Activated CD4-positive, alpha-beta T cell treated with anti-CD3 and anti-CD28 coated beads for 36 hours (primary cell): ENCODE measurements at regions of chr4 and their contacts with region 1.

Region 1: GRCh38 chr4:70734168-70734954 is 12.6 kb downstream of the RUFY3 start:
- DNase-seq: peak; percentile 39
- ATAC-seq: peak; percentile 92
- H3K4me3 Mint-ChIP-seq: peak overlapping the region; percentile 52
- H3K27ac Mint-ChIP-seq: peak overlapping the region; percentile 74
- H3K4me1 Mint-ChIP-seq: peaks cover 36% of the 10 kb centered on the region
- H3K27me3 Mint-ChIP-seq: no peaks in the 10 kb centered on the region

Region 2: DNA sequence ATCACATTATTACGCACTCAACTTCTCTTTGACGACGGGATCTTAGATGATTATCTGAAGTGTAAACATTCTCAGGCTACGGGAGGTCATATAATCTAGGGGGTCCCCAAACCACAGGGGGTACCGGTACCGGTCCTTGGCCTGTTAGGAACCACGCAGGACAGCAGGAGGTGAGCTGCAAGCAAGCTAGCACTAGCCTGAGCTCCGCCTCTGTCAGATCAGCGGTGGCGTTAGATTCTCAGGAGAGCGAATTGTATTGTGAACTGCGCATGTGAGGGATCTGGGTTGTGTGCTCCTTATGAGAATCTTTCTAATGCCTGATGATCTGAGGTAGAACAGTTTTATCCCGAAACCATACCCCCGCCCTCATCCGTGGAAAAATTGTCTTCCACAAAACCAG is 600.9 kb before region 1 on chr4:
- CTCF ChIA-PET with region 1: no interaction called
- POLR2A ChIA-PET with region 1: no interaction called
- intact Hi-C with region 1: no loop called
- DNase-seq: no peak
- ATAC-seq: no peak
- H3K4me3 Mint-ChIP-seq: no peak overlapping the region
- H3K27ac Mint-ChIP-seq: no peak overlapping the region
- H3K4me1 Mint-ChIP-seq: no peaks in the 10 kb centered on the region
- H3K27me3 Mint-ChIP-seq: no peaks in the 10 kb centered on the region

Region 3: DNA sequence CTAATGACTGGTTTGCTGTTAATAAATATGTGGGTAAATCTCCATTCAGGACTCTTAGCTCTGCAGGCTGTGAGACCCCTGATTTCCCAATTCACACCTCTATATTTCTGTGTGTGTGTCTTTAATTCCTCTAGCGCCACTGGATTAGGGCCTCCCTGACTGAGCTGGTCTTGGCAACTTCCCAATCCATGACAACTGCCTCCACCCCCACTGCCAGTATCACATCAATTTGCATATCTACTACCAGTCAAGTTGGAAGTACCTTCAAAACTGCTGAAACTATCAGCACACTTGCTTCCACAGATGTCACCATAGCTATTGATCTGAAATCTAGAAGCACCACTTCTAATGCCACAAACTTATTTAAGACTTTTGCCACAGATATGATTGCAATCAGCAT is 309.1 kb before region 1 on chr4:
- CTCF ChIA-PET with region 1: no interaction called
- POLR2A ChIA-PET with region 1: no interaction called
- intact Hi-C with region 1: no loop called
- DNase-seq: no peak
- ATAC-seq: no peak
- H3K4me3 Mint-ChIP-seq: no peak overlapping the region
- H3K27ac Mint-ChIP-seq: no peak overlapping the region
- H3K4me1 Mint-ChIP-seq: no peaks in the 10 kb centered on the region
- H3K27me3 Mint-ChIP-seq: no peaks in the 10 kb centered on the region

Region 4: GRCh38 chr4:70721747-70722146 is 12.6 kb before region 1 on chr4 and contains the start of gene RUFY3:
- CTCF ChIA-PET with region 1: interaction called, 19 read pairs
- POLR2A ChIA-PET with region 1: no interaction called
- intact Hi-C with region 1: no loop called
- DNase-seq: no peak
- ATAC-seq: no peak
- H3K4me3 Mint-ChIP-seq: no peak within 1 kb of the TSS
- H3K27ac Mint-ChIP-seq: no peak within 1 kb of the TSS
- H3K4me1 Mint-ChIP-seq: peaks cover 22% of the 10 kb centered on the region
- H3K27me3 Mint-ChIP-seq: no peaks in the 10 kb centered on the region
- total RNA-seq, gene RUFY3: 10.6 to 11.2 TPM

Region 5: DNA sequence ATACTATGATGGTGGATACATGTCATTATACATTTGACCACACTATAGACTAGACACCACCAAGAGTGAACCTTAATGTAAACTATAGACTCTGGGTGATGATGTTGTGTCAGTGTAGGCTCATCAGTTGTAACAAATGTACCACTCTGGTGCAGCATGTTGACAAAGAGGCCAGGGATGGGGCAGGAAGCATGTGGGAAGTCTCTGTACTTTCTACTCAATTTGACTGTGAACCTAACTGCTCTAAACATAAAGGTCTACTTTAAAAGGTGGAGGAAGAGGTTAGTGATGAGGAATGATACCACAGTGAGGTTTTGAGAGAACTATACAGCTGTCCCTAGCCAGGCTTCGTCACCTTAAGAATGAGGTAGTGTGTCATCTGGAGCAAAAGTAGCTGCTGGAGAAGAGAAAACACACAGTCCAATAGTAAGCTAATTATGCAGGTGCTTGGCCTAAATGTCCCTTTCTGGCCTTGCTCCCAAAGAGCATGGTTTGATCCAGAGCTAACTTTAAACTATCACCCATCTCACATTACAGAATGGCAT is 67.0 kb after region 1 on chr4:
- CTCF ChIA-PET with region 1: no interaction called
- POLR2A ChIA-PET with region 1: no interaction called
- intact Hi-C with region 1: loop called in 1 of 2 experiments (anchors 10 kb)
- DNase-seq: peak; percentile 54
- ATAC-seq: peak; percentile 98
- H3K4me3 Mint-ChIP-seq: no peak overlapping the region
- H3K27ac Mint-ChIP-seq: peak overlapping the region; percentile 56
- H3K4me1 Mint-ChIP-seq: peaks cover 22% of the 10 kb centered on the region
- H3K27me3 Mint-ChIP-seq: no peaks in the 10 kb centered on the region

Region 6: DNA sequence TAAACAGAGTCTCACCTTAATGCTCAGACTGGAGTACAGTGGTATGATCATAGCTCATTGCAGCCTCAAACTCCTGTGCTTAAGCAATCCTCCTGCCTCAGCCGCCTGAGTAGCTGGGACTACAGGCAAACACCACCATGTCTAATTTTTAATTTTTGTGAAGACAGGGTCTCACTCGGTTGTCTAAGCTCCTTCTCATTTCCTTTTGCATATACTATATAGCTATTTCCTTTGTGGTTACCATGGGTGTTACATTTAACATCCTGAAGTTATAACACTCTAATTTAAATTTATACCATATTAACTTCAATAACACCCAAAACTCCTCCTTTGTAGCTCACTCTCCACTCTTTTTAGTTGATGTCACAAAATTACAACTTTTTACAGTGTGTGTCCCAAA is 373.4 kb after region 1 on chr4:
- CTCF ChIA-PET with region 1: no interaction called
- POLR2A ChIA-PET with region 1: no interaction called
- intact Hi-C with region 1: no loop called
- DNase-seq: no peak
- ATAC-seq: no peak
- H3K4me3 Mint-ChIP-seq: no peak overlapping the region
- H3K27ac Mint-ChIP-seq: no peak overlapping the region
- H3K4me1 Mint-ChIP-seq: peaks cover 28% of the 10 kb centered on the region
- H3K27me3 Mint-ChIP-seq: no peaks in the 10 kb centered on the region